Mammary epithelial cell (primary cell): ENCODE measurements at regions of chr16 and their contacts with region 1.

Region 1: GRCh38 chr16:4734063-4734729 is at the starts of genes ANKS3 and DNAAF8:
- DNase-seq: peak; percentile 98
- H3K4me3 ChIP-seq: peak within 1 kb of the TSS; percentile 80 to 98 (median 92)
- H3K27ac ChIP-seq: peak within 1 kb of the TSS; percentile 83
- H3K4me1 ChIP-seq: peaks cover 6% of the 10 kb centered on the region
- H3K27me3 ChIP-seq: no peaks in the 10 kb centered on the region
- CTCF ChIP-seq: no peak
- total RNA-seq, gene ANKS3: 14.5 to 24.3 TPM
- total RNA-seq, gene DNAAF8: 0.17 to 0.71 TPM

Region 2: DNA sequence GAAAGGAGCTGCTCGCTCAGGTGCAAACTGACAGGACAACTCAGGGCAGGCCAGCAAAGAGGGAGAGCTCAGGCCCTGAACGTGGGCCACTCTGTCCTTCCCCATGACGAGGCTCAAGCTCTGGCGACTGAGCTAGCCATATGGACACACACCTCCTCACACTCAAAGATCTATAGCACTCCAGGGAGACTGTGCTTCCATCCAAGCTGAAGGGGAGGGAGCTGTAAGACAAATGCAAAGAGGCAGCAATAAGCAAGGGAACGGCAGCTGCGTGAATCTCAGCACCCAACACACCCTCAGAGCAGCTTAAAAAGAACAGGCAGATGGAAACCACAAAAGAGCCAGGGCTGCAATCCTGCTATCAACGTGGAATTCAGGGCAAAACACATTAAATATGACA is 27.3 kb before region 1 on chr16:
- CTCF ChIA-PET with region 1: interaction called, 17 read pairs
- dilution Hi-C with region 1: no loop called
- in situ Hi-C with region 1: no loop called
- intact Hi-C with region 1: no loop called
- DNase-seq: no peak
- H3K4me3 ChIP-seq: no peak overlapping the region
- H3K27ac ChIP-seq: no peak overlapping the region
- H3K4me1 ChIP-seq: no peaks in the 10 kb centered on the region
- H3K27me3 ChIP-seq: no peaks in the 10 kb centered on the region
- CTCF ChIP-seq: no peak

Region 3: GRCh38 chr16:4790871-4791270 is 56.7 kb after region 1 on chr16:
- CTCF ChIA-PET with region 1: no interaction called
- dilution Hi-C with region 1: no loop called
- in situ Hi-C with region 1: no loop called
- intact Hi-C with region 1: no loop called
- DNase-seq: no peak
- H3K4me3 ChIP-seq: no peak overlapping the region
- H3K27ac ChIP-seq: no peak overlapping the region
- H3K4me1 ChIP-seq: peaks cover 3% of the 10 kb centered on the region
- H3K27me3 ChIP-seq: no peaks in the 10 kb centered on the region
- CTCF ChIP-seq: no peak

Region 4: DNA sequence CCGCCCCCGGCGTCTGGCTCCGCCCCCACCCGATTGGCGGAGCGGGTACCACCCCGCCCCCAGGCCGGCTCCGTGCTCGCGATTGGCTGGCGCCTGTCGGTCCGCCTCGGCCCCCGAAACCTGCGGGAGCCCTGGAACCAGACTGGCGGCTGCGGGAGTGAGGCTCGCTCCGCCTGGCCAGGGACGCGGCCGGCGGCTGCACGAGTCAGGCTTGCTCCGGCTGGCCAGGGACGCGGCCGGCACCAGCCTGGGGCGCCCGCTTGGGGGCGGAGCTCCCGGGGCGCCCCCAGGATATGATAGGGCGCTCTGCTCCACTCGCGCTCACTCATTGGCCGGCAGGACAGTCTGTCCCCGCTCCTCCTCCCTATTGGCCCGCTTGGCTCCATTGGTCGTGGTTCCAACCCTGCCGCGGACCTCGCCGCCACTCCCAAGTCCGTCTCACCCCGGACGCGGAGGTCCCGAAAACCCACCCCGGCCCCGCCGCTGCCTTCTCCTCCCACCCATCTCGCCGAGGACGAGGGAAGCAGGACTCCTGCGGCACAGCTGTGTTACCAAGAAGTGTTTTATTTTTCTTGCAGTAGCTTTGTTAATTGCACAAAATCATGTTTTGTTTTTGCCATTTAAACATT is 68.6 kb after region 1 on chr16:
- CTCF ChIA-PET with region 1: no interaction called
- dilution Hi-C with region 1: loop called (anchors 10 kb)
- in situ Hi-C with region 1: no loop called
- intact Hi-C with region 1: loop called (anchors 2 kb)
- DNase-seq: peak; percentile 90
- H3K4me3 ChIP-seq: peak overlapping the region; percentile 73 to 80 (median 77)
- H3K27ac ChIP-seq: peak overlapping the region; percentile 53
- H3K4me1 ChIP-seq: peaks cover 26% of the 10 kb centered on the region
- H3K27me3 ChIP-seq: no peaks in the 10 kb centered on the region
- CTCF ChIP-seq: no peak